Calu3 (cell line): ENCODE measurements at regions of chr1 and their contacts with region 1.

Region 1: GRCh38 chr1:159891275-159892157 is 8.4 kb downstream of the CFAP45 start:
- DNase-seq: peak; percentile 91
- H3K4me3 Mint-ChIP-seq: no peak overlapping the region
- H3K27ac Mint-ChIP-seq: no peak overlapping the region
- H3K4me1 Mint-ChIP-seq: peaks cover 11% of the 10 kb centered on the region
- H3K27me3 Mint-ChIP-seq: no peaks in the 10 kb centered on the region
- CTCF ChIP-seq: peak; percentile 99

Region 2: GRCh38 chr1:159161001-159161718 is 730.4 kb before region 1 on chr1:
- CTCF ChIA-PET with region 1: no interaction called
- intact Hi-C with region 1: loop called (anchors 2 kb)
- DNase-seq: peak; percentile 86
- H3K4me3 Mint-ChIP-seq: no peak overlapping the region
- H3K27ac Mint-ChIP-seq: no peak overlapping the region
- H3K4me1 Mint-ChIP-seq: no peaks in the 10 kb centered on the region
- H3K27me3 Mint-ChIP-seq: peaks cover 53% of the 10 kb centered on the region
- CTCF ChIP-seq: peak; percentile 98

Region 3: DNA sequence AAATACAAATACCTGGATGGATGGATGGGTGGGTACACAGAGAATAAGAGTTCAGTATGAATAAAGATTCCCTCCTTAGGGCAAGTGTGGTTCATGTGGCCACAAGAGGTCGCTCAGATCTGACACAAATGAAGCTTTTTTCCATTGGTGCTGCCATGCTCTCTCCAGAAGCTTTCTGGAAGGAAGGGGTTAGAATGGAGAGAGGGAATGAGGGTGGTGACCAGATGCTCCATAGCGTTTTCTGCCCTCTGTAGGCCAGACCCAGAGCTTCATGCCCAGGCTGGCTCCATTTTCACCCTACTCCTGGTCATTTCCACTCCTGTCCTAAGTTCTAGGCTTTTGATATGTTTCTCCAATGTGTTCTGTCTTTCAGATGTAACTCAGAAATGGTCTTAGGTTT is 92.6 kb before region 1 on chr1:
- CTCF ChIA-PET with region 1: interaction called, 54 read pairs
- intact Hi-C with region 1: loop called (anchors 1 kb)
- DNase-seq: peak; percentile 71
- H3K4me3 Mint-ChIP-seq: no peak overlapping the region
- H3K27ac Mint-ChIP-seq: no peak overlapping the region
- H3K4me1 Mint-ChIP-seq: no peaks in the 10 kb centered on the region
- H3K27me3 Mint-ChIP-seq: peaks cover 40% of the 10 kb centered on the region
- CTCF ChIP-seq: peak; percentile 64

Region 4: GRCh38 chr1:159835862-159836525 is 55.5 kb before region 1 on chr1:
- CTCF ChIA-PET with region 1: interaction called, 7 read pairs
- intact Hi-C with region 1: loop called (anchors 2 kb)
- DNase-seq: no peak
- H3K4me3 Mint-ChIP-seq: no peak overlapping the region
- H3K27ac Mint-ChIP-seq: no peak overlapping the region
- H3K4me1 Mint-ChIP-seq: peaks cover 8% of the 10 kb centered on the region
- H3K27me3 Mint-ChIP-seq: peaks cover 26% of the 10 kb centered on the region
- CTCF ChIP-seq: no peak

Region 5: GRCh38 chr1:159924981-159925712 is 33.6 kb after region 1 on chr1 and contains the start of gene TAGLN2:
- CTCF ChIA-PET with region 1: interaction called, 42 read pairs
- intact Hi-C with region 1: no loop called
- DNase-seq: peak; percentile 95
- H3K4me3 Mint-ChIP-seq: peak within 1 kb of the TSS; percentile 83
- H3K27ac Mint-ChIP-seq: peak within 1 kb of the TSS; percentile 98
- H3K4me1 Mint-ChIP-seq: peaks cover 48% of the 10 kb centered on the region
- H3K27me3 Mint-ChIP-seq: no peaks in the 10 kb centered on the region
- CTCF ChIP-seq: no peak
- total RNA-seq, gene TAGLN2: 612 and 708 TPM in 2 replicates

Region 6: DNA sequence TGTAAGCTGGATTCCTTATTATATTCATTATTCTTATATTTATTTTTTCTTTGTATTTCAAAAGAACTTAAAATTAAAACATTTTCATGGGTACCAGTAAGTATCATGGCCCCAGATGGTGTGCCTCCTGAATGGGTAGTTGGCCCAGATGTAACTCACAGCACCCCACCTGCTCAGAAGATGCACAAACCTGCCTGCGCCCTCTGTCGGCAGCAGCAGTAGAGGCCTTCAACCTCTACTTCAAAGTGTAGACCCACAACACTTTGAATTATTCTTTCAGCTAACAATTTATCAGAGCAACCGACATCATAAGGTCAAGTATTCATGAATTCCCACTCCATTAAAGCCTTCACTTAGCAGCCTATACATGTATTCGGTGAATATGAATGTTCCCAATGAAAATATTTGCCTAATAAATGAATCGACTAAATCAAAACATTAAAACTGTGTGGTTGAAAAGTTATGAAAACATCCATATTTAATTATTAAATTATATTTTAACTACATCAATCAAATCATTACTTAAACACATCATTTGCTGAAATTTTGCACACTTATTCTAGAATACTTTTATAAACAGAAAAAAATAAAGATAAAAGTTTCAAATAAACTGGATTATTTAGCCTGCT is 114.9 kb after region 1 on chr1:
- CTCF ChIA-PET with region 1: interaction called, 110 read pairs
- intact Hi-C with region 1: loop called (anchors 1 kb)
- DNase-seq: peak; percentile 85
- H3K4me3 Mint-ChIP-seq: no peak overlapping the region
- H3K27ac Mint-ChIP-seq: no peak overlapping the region
- H3K4me1 Mint-ChIP-seq: no peaks in the 10 kb centered on the region
- H3K27me3 Mint-ChIP-seq: peaks cover 42% of the 10 kb centered on the region
- CTCF ChIP-seq: peak; percentile 93

Region 7: GRCh38 chr1:160205242-160206035 is 313.9 kb after region 1 on chr1 and contains the start of gene PEA15:
- CTCF ChIA-PET with region 1: no interaction called
- intact Hi-C with region 1: no loop called
- DNase-seq: peak; percentile 84
- H3K4me3 Mint-ChIP-seq: peak within 1 kb of the TSS; percentile 80
- H3K27ac Mint-ChIP-seq: peak within 1 kb of the TSS; percentile 67
- H3K4me1 Mint-ChIP-seq: peaks cover 36% of the 10 kb centered on the region
- H3K27me3 Mint-ChIP-seq: peaks cover 2% of the 10 kb centered on the region
- CTCF ChIP-seq: no peak
- total RNA-seq, gene PEA15: 128 and 153 TPM in 2 replicates